ENCODE measurements at regions of chr5 and their contacts with region 1.

Region 1: GRCh38 chr5:26807231-26808199 is 230.9 kb downstream of the CDH9 start:
- DNase-seq: peak in 1 of 5 donors; percentile 36
- H3K4me3 ChIP-seq: no peak overlapping the region
- H3K4me3 Mint-ChIP-seq: no peak overlapping the region
- H3K27ac ChIP-seq: no peak overlapping the region
- H3K27ac Mint-ChIP-seq: no peak overlapping the region
- H3K4me1 ChIP-seq: no peaks in the 10 kb centered on the region
- H3K4me1 Mint-ChIP-seq: no peaks in the 10 kb centered on the region
- H3K27me3 ChIP-seq: no peaks in the 10 kb centered on the region
- H3K27me3 Mint-ChIP-seq: no peaks in the 10 kb centered on the region

Region 2: DNA sequence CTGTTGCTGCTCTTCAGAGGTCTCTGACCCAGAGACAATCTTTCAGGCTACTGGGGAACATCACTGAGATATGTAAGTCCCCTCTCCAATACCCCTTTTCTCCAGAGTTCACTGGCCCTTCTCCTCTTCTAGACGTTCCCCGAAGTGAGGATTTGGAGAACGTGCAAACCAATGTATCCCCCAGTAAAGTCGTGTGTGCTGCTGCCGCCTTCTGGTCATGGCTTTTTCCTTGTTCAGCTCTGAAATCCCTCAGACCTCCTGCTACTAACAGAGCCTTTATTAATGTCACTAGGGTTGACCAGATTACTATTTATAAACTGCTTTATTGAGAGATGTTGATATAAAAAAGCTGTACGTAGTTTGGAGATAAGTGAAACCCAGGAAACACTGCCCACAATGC is 797.8 kb before region 1 on chr5:
- CTCF ChIA-PET with region 1: no interaction called
- POLR2A ChIA-PET with region 1: no interaction called
- intact Hi-C with region 1: no loop called
- DNase-seq: no peak
- H3K4me3 ChIP-seq: no peak overlapping the region
- H3K4me3 Mint-ChIP-seq: no peak overlapping the region
- H3K27ac ChIP-seq: no peak overlapping the region
- H3K27ac Mint-ChIP-seq: no peak overlapping the region
- H3K4me1 ChIP-seq: no peaks in the 10 kb centered on the region
- H3K4me1 Mint-ChIP-seq: no peaks in the 10 kb centered on the region
- H3K27me3 ChIP-seq: no peaks in the 10 kb centered on the region
- H3K27me3 Mint-ChIP-seq: no peaks in the 10 kb centered on the region

Region 3: GRCh38 chr5:26791433-26791832 is 16.1 kb before region 1 on chr5:
- CTCF ChIA-PET with region 1: no interaction called
- POLR2A ChIA-PET with region 1: no interaction called
- intact Hi-C with region 1: loop called (anchors 1 kb)
- DNase-seq: no peak
- H3K4me3 ChIP-seq: no peak overlapping the region
- H3K4me3 Mint-ChIP-seq: no peak overlapping the region
- H3K27ac ChIP-seq: no peak overlapping the region
- H3K27ac Mint-ChIP-seq: no peak overlapping the region
- H3K4me1 ChIP-seq: no peaks in the 10 kb centered on the region
- H3K4me1 Mint-ChIP-seq: no peaks in the 10 kb centered on the region
- H3K27me3 ChIP-seq: no peaks in the 10 kb centered on the region
- H3K27me3 Mint-ChIP-seq: no peaks in the 10 kb centered on the region

Region 4: DNA sequence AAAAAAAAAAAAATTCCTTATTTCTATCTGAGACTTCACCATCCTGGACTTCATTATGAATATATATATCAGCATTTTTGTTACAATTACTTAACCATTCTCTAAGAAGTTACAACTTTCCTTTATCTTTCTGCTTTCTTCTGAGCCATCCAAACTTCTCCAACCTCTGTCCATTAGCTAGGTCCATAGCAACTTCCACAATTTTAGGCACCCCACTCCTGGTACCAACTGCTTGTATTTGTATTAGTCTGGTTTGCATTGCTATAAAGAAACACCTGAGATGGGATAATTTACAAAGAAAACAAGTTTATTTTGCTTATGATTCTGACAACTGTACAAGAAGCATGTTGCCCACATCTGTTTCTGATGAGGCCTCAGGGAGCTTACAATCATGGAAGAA is 48.7 kb after region 1 on chr5:
- CTCF ChIA-PET with region 1: no interaction called
- POLR2A ChIA-PET with region 1: no interaction called
- intact Hi-C with region 1: no loop called
- DNase-seq: no peak
- H3K4me3 ChIP-seq: no peak overlapping the region
- H3K4me3 Mint-ChIP-seq: no peak overlapping the region
- H3K27ac ChIP-seq: no peak overlapping the region
- H3K27ac Mint-ChIP-seq: no peak overlapping the region
- H3K4me1 ChIP-seq: no peaks in the 10 kb centered on the region
- H3K4me1 Mint-ChIP-seq: no peaks in the 10 kb centered on the region
- H3K27me3 ChIP-seq: no peaks in the 10 kb centered on the region
- H3K27me3 Mint-ChIP-seq: no peaks in the 10 kb centered on the region